Sciatic nerve (tissue), 2 donors: ENCODE measurements at regions of chr9 and their contacts with region 1.

Region 1: GRCh38 chr9:72292256-72292682 is 72.7 kb downstream of the ZFAND5 start:
- DNase-seq: no peak
- ATAC-seq: peak; percentile 70

Region 2: GRCh38 chr9:70444904-70445303 is 1847.4 kb before region 1 on chr9:
- intact Hi-C with region 1: no loop called
- DNase-seq: no peak
- ATAC-seq: no peak

Region 3: DNA sequence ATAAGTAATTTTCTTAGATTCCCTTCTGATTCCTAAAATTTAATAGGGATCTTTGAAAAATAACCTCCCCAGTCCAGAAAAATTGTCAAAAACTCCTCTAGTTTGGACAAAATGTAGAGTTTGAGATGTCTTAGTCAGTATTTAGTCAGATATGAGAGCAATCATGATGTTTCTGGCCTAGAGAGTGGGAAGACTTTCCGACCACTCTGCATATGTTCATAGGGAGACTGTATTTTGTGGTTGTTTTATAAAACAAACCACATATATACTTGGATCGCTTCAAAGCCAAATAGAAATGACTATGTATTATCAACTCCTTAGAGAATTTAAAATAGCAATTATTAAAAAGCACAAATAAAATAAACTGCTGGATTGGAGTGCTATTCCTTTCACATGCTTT is 57.0 kb after region 1 on chr9:
- intact Hi-C with region 1: loop called (anchors 10 kb)
- DNase-seq: no peak
- ATAC-seq: no peak

Region 4: DNA sequence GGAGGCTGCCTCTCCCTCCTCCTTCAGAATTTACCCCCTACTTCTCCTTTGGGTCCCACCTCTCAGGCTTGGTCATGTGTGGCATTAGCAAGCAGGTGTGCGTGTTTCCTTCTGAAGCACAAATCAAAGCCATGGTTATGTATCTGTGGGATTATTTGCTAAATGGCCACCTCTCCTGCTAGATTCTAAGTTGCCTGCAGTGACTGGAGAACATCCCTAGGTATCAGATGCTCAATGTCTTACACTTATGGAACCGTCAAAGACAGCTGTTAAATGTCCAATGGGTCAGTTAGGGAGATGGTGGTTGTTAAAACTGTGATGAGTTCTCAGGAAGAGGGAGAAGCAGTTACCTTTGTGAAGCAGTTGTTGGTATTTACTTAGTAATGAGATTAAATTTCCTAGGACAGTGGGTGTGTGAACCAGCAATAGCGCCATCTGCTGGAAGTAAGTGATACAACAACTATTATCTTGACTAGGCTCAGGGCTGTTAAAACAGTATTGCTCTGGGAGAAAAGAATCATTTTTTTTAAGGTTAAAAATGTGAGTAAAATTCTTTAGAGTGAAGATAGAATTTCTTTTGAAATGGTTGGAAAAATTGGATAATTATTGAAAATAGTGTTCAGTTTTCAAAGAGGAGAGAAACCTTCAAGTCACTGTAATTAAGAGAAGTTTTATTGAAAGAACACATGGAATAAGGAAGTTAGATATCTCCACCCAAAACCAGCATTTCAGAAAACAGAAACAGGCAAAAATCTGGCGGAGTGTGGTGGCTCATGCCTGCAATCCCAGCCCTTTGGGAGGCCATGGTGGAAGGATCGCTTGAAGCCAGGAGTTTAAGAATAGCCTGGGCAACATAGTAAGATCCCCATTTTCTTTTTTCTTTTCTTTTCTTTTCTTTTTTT is 300.5 kb after region 1 on chr9:
- intact Hi-C with region 1: loop called (anchors 5 kb)
- DNase-seq: no peak
- ATAC-seq: peak; percentile 90